AG04449 (cell line): ENCODE measurements at regions of chr19 and their contacts with region 1.

Region 1: DNA sequence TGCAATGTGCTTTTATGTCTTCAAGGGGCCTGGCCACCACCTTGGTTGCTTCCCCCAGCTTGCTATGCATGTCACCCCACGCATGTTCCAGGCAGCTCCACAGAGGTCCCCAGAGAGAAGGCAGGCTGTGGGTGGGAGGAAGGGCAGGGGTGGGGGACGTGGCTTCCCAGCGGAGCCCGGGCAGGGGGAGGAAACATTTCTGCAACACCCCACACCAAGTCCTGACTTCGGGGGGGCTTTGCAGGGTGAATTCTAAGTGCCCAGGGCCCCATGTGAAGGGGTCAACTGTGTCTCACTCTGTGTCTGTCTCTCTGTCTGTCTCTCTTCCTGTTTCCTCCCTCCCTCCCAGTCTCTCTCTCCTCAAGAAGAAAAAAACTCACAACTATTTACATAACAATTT is 39.6 kb downstream of the LTBP4 start:
- DNase-seq: no peak
- H3K4me3 ChIP-seq: no peak overlapping the region
- CTCF ChIP-seq: no peak

Region 2: GRCh38 chr19:40613640-40614303 is 27.0 kb before region 1 on chr19:
- CTCF ChIA-PET with region 1: interaction called, 135 read pairs
- POLR2A ChIA-PET with region 1: no interaction called
- DNase-seq: no peak
- H3K4me3 ChIP-seq: peak overlapping the region; percentile 89
- CTCF ChIP-seq: no peak

Region 3: DNA sequence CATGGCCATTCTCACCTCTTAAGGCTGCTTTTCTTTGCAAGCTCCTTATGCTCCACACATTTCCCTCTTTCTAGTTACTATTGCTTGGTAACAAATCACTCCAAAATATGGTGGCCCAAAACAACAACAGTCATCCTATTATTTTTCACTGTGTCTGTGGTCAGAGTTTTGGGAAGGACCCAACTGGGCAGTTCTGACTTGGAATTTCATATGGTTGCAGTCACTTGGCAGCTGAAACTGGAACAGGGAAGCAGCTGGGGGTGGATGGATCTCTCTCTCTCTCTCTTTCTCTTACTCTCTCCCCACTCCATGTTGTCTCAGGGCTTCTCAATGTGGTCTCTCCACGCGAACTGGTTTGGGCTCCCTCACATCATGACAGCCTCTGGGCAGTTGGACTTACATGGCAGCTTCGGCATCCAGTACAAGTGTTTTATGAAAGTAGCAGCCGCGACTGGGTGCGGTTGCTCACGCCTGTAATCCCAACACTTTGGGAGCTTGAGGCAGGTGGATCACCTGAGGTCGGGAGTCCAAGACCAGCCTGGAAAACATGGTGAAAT is 10.1 kb after region 1 on chr19:
- CTCF ChIA-PET with region 1: interaction called, 139 read pairs
- POLR2A ChIA-PET with region 1: no interaction called
- DNase-seq: no peak
- H3K4me3 ChIP-seq: no peak overlapping the region
- CTCF ChIP-seq: no peak

Region 4: GRCh38 chr19:40658031-40658430 is 17.3 kb after region 1 on chr19:
- CTCF ChIA-PET with region 1: interaction called, 28 read pairs
- POLR2A ChIA-PET with region 1: interaction called, 3 read pairs
- DNase-seq: no peak
- H3K4me3 ChIP-seq: no peak overlapping the region
- CTCF ChIP-seq: no peak